Left ventricle myocardium superior (tissue), 1 donor: ENCODE measurements at regions of chr2 and their contacts with region 1.

Region 1: GRCh38 chr2:76197842-76198448 is 487.2 kb upstream of the GCFC2 start:
- DNase-seq: peak; percentile 22
- ATAC-seq: no peak

Region 2: GRCh38 chr2:76599732-76600368 is 401.9 kb after region 1 on chr2:
- intact Hi-C with region 1: loop called (anchors 10 kb)
- DNase-seq: peak; percentile 36
- ATAC-seq: peak; percentile 87